Mammary epithelial cell (primary cell): ENCODE measurements at regions of chr17 and their contacts with region 1.

Region 1: GRCh38 chr17:49548506-49549310 is 27.0 kb upstream of the NXPH3 start:
- DNase-seq: peak; percentile 51
- H3K4me3 ChIP-seq: no peak overlapping the region
- H3K27ac ChIP-seq: no peak overlapping the region
- H3K4me1 ChIP-seq: peaks cover 19% of the 10 kb centered on the region
- H3K27me3 ChIP-seq: no peaks in the 10 kb centered on the region
- CTCF ChIP-seq: peak; percentile 77

Region 2: GRCh38 chr17:49093082-49093741 is 455.5 kb before region 1 on chr17:
- CTCF ChIA-PET with region 1: no interaction called
- dilution Hi-C with region 1: no loop called
- in situ Hi-C with region 1: no loop called
- intact Hi-C with region 1: no loop called
- DNase-seq: no peak
- H3K4me3 ChIP-seq: no peak overlapping the region
- H3K27ac ChIP-seq: no peak overlapping the region
- H3K4me1 ChIP-seq: no peaks in the 10 kb centered on the region
- H3K27me3 ChIP-seq: no peaks in the 10 kb centered on the region
- CTCF ChIP-seq: no peak

Region 3: DNA sequence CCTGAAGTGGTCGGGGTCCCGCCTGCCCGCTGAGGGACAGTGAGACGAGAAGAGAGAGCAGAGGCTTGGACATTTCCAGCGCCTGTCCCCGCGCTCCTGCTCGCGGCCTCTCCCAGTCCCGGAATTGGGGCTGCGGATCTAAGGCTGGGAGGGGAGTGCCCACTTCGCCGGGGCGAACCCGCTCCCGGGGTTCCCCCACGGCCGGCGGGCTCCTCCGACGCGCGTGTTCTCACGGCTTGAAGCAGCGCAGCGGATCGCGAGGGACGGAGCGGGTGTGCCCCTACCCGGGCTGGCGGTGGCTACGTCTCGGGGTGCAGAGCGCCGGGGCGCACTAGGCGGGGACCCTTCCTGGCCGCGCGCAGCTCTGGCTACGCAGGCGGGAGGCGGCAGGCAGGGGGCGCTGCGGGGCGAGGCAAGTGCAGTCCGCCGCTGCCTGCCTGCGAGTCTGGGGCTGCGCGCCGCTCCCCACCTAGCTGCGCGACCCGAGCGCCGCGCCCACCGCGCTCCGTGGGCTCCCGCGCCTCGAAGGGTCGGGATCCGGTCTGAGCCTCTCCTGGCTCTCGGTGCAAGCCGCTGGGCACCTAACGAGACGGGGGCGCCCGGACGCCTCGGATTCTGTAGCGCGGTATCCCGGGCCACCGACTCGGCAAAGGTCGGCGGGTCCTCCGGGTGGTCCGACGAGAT is 52.4 kb before region 1 on chr17:
- CTCF ChIA-PET with region 1: no interaction called
- dilution Hi-C with region 1: no loop called
- in situ Hi-C with region 1: loop called (anchors 5 kb)
- intact Hi-C with region 1: loop called (anchors 1 kb)
- DNase-seq: peak; percentile 59
- H3K4me3 ChIP-seq: peak overlapping the region; percentile 60 to 79 (median 63)
- H3K27ac ChIP-seq: no peak overlapping the region
- H3K4me1 ChIP-seq: peaks cover 24% of the 10 kb centered on the region
- H3K27me3 ChIP-seq: no peaks in the 10 kb centered on the region
- CTCF ChIP-seq: peak; percentile 52 to 73

Region 4: DNA sequence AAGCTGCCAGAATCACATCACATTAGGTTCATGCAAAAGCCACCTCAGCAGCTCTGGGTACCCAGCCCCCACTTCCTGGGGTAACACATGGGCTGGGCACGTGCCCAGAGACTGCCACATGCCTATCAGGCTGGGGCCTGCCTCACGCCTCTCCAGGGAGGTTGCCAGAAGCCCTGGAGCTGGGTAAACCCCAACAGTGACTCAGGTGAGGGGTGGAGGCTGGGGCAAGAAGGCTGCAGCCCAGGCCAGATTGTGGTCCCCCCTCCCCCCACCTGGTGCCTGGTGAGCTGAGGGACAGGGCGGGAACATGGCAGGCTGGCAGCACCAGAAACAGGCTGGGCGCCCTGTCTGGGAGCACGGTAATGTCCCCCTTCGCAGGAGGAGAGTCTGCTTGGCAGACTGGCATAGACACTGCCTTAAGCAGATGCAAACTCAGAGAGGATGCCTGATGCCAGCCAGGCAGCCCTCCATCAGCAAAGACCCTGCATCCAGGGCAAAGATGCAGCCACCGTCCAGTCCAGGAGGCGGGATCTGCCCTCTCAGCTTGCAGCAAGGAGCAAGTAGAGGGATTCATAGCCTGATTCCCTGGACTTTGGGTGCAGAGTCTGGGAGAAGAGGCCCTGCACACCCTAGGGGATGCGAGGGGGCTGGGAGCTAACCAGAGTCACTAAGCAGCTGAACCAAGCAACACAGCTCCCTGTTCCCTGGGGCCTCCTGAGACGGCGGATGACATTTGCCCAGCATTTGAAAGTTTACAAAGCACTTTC is 24.8 kb before region 1 on chr17:
- CTCF ChIA-PET with region 1: no interaction called
- dilution Hi-C with region 1: no loop called
- in situ Hi-C with region 1: no loop called
- intact Hi-C with region 1: loop called (anchors 2 kb)
- DNase-seq: peak; percentile 95
- H3K4me3 ChIP-seq: no peak overlapping the region
- H3K27ac ChIP-seq: peak overlapping the region; percentile 35
- H3K4me1 ChIP-seq: peaks cover 22% of the 10 kb centered on the region
- H3K27me3 ChIP-seq: no peaks in the 10 kb centered on the region
- CTCF ChIP-seq: no peak

Region 5: GRCh38 chr17:49585422-49586027 is 36.8 kb after region 1 on chr17:
- CTCF ChIA-PET with region 1: no interaction called
- dilution Hi-C with region 1: no loop called
- in situ Hi-C with region 1: no loop called
- intact Hi-C with region 1: no loop called
- DNase-seq: no peak
- H3K4me3 ChIP-seq: no peak overlapping the region
- H3K27ac ChIP-seq: no peak overlapping the region
- H3K4me1 ChIP-seq: peaks cover 5% of the 10 kb centered on the region
- H3K27me3 ChIP-seq: no peaks in the 10 kb centered on the region
- CTCF ChIP-seq: peak; percentile 7 to 26